Activated naive CD4-positive, alpha-beta T cell treated with anti-CD3 and anti-CD28 coated beads for 36 hours (primary cell): ENCODE measurements at regions of chr15 and their contacts with region 1.

Region 1: DNA sequence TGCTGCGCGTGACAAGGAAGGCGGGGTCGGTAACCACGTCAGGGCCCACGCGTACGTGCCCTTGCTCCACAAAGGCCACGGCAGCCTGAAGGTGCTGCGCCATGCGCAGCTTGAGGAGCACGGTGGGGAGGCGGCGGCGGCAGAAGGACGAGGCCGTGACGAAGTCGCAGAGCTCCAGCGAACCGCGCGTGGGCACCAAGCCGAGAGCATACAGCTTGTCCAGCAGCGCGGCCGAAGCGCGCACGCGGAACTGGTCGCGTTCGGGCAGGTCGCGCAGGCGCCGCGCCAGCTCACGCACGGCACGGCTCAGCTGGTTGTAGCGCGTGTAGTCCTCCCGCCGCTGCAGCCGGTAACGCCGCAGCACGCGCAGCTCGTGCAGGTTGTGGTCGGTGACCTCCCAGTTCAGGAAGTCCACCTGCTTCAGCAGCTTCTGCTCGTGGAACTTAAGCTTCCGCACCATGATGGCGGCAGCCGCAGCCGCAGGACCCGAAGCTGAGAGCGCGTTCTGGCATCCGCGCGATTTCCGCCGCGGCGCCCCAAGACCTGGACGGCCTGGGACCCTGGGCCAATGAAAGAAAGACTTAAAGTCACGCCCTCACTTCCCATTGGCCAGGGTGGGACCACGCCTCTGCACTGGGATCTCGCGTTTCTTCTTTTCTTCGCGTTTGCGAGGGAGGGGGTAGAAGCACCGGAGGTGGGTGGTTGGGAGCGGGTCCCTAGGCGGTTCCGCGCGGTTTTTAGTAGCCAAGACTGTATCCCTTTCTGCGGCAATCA is at the start of gene IMP3:
- DNase-seq: peak; percentile 97
- H3K4me3 Mint-ChIP-seq: peak within 1 kb of the TSS; percentile 95
- H3K27ac Mint-ChIP-seq: peak within 1 kb of the TSS; percentile 91
- H3K4me1 Mint-ChIP-seq: peaks cover 30% of the 10 kb centered on the region
- H3K27me3 Mint-ChIP-seq: no peaks in the 10 kb centered on the region
- total RNA-seq, gene IMP3: 46.1 to 46.8 TPM

Region 2: DNA sequence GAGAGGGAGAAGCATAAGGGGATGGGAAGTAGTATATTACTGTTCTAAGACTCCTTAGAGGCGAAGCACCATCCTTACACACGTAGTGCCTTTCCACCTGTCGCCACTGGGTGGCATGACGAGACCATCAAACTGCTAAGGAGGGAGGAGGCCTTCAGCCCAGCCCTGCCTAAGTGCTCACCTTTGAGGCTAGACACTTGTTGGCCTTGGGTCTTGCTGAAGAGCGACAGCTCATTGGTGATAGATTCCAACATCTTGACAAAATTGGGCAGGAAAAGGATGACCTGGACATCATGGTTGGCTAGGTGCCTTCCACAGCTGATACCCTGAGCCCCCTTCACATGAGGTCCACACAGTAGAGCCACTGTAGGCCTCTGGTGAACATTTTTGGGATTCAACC is 1004.7 kb before region 1 on chr15:
- CTCF ChIA-PET with region 1: no interaction called
- intact Hi-C with region 1: no loop called
- DNase-seq: peak; percentile 86
- H3K4me3 Mint-ChIP-seq: no peak overlapping the region
- H3K27ac Mint-ChIP-seq: no peak overlapping the region
- H3K4me1 Mint-ChIP-seq: no peaks in the 10 kb centered on the region
- H3K27me3 Mint-ChIP-seq: no peaks in the 10 kb centered on the region

Region 3: DNA sequence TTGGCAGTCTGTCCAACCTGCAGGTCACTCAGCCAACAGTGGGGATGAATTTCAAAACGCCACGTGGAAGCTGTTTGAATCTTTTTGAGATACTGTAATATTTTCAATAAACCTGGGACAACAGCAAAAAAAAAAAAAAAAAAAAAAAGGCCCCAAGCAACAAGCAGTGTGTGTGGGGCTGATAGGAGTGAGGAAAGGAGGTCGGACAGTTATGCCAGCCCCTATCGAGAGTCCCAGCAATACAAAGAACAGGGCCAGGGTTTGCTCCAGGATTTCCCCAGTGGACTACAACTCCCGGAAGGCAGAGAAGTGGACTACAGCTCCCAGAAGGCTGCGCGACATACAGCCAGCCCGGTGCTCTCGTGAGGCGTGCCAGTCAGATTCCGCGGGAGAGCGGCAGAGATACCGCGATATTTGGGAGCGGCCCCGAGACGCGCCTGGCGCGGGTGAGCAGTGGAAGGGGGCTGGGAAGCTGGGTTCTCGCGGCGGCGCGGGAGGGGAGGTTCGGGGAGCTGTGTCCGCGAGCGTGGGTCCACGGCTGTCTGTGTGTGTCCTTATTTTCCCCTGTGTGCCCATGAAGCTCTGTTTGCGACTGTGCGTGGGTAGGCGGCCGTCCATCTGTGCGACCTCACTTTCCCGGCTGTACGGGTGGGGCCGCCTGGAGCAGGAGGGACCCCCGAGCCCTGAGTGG is 616.6 kb before region 1 on chr15 and contains the start of gene PPCDC:
- CTCF ChIA-PET with region 1: no interaction called
- intact Hi-C with region 1: loop called (anchors 1 kb)
- DNase-seq: peak; percentile 98
- H3K4me3 Mint-ChIP-seq: peak within 1 kb of the TSS; percentile 90
- H3K27ac Mint-ChIP-seq: peak within 1 kb of the TSS; percentile 90
- H3K4me1 Mint-ChIP-seq: peaks cover 16% of the 10 kb centered on the region
- H3K27me3 Mint-ChIP-seq: no peaks in the 10 kb centered on the region
- total RNA-seq, gene PPCDC: 17.5 to 18.0 TPM

Region 4: GRCh38 chr15:75508840-75509532 is 130.9 kb before region 1 on chr15:
- CTCF ChIA-PET with region 1: interaction called, 14 read pairs
- intact Hi-C with region 1: loop called (anchors 1 kb)
- DNase-seq: peak; percentile 23
- H3K4me3 Mint-ChIP-seq: no peak overlapping the region
- H3K27ac Mint-ChIP-seq: no peak overlapping the region
- H3K4me1 Mint-ChIP-seq: no peaks in the 10 kb centered on the region
- H3K27me3 Mint-ChIP-seq: no peaks in the 10 kb centered on the region

Region 5: GRCh38 chr15:75597667-75598341 is 42.1 kb before region 1 on chr15:
- CTCF ChIA-PET with region 1: interaction called, 7 read pairs
- intact Hi-C with region 1: loop called (anchors 1 kb)
- DNase-seq: peak; percentile 69
- H3K4me3 Mint-ChIP-seq: no peak overlapping the region
- H3K27ac Mint-ChIP-seq: no peak overlapping the region
- H3K4me1 Mint-ChIP-seq: peaks cover 16% of the 10 kb centered on the region
- H3K27me3 Mint-ChIP-seq: no peaks in the 10 kb centered on the region

Region 6: DNA sequence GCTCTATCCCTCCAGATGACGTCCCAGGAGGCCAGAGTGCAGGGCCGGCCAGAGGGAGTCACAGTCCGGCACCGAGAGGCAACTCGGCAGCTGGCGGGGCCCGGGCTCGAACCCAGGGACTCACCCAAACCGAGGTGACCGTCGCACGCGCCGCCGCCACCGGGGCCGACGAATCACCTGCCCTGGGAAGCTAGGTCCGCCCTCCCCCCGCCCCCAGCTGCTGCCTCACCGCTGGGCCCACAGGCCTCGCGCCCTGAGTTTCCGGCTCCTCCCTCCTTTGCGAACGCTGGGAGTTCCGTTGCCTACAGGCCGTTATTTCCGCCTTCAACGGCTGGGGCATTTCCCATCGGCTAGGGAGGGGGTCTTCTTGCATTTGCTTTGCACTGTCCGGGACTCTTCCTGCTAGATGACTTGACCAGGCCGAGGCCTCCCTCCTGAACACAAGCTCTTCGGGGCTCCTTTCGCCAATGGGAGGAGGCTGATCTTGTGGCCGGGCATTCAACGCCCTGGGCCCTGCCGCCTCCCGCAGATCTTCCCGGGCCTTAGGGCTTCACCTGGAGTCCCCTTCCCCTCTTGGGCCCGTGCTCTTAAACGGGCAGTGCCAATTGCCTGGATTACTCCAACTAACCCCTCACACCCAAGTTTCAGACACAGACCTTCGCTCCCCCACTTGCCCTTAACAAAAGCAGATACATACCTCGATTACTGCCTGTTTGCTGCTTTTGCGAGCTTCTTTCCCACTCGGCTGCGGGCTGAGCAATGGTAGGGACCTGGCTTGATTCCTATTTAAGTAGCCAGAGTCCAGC is 14.2 kb before region 1 on chr15 and contains the start of gene SNUPN:
- CTCF ChIA-PET with region 1: interaction called, 24 read pairs
- intact Hi-C with region 1: loop called (anchors 1 kb)
- DNase-seq: peak; percentile 98
- H3K4me3 Mint-ChIP-seq: peak within 1 kb of the TSS; percentile 95
- H3K27ac Mint-ChIP-seq: peak within 1 kb of the TSS; percentile 99
- H3K4me1 Mint-ChIP-seq: peaks cover 41% of the 10 kb centered on the region
- H3K27me3 Mint-ChIP-seq: no peaks in the 10 kb centered on the region
- total RNA-seq, gene SNUPN: 28.5 to 33.1 TPM

Region 7: GRCh38 chr15:75712668-75713337 is 72.9 kb after region 1 on chr15 and contains the start of gene CSPG4:
- CTCF ChIA-PET with region 1: no interaction called
- intact Hi-C with region 1: no loop called
- DNase-seq: no peak
- H3K4me3 Mint-ChIP-seq: no peak within 1 kb of the TSS
- H3K27ac Mint-ChIP-seq: no peak within 1 kb of the TSS
- H3K4me1 Mint-ChIP-seq: no peaks in the 10 kb centered on the region
- H3K27me3 Mint-ChIP-seq: peaks cover 11% of the 10 kb centered on the region
- total RNA-seq, gene CSPG4: not detected